HEK293 (cell line): ENCODE measurements at regions of chr1 and their contacts with region 1.

Region 1: DNA sequence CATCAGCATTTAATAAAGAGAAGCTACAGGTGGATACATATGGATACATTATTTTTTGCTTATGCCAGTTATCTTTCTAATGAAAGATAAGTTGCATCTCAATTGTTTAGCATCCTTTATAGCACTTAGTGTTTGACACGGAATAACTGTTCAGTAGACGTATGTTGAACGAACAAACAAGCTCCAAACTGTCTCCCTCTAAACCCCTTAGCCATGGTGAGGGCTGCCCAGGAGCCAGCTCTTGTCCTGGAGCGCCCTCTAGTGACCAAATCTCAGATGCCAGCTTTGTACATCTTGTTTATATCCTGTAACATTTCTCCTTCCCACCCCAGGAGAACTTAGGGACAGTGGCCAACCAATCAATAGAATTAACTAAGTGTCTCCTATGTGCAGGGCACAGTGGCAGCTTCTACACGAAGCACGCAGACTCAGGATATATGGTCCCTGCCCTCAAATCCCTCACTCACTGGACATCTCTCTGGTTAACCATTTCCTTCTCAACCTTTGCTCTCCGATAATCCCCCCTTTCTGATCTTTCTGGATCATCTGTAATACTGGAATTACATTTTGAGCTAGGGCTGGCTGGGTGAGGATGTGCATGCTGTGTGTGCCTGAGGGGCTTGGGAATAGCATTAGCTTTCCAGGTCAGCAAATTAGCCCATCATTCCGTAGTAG is 22.9 kb downstream of the KCNA10 start:
- H3K4me3 ChIP-seq: no peak overlapping the region
- H3K27ac ChIP-seq: no peak overlapping the region
- H3K4me1 ChIP-seq: no peaks in the 10 kb centered on the region
- CTCF ChIP-seq: peak; percentile 87

Region 2: DNA sequence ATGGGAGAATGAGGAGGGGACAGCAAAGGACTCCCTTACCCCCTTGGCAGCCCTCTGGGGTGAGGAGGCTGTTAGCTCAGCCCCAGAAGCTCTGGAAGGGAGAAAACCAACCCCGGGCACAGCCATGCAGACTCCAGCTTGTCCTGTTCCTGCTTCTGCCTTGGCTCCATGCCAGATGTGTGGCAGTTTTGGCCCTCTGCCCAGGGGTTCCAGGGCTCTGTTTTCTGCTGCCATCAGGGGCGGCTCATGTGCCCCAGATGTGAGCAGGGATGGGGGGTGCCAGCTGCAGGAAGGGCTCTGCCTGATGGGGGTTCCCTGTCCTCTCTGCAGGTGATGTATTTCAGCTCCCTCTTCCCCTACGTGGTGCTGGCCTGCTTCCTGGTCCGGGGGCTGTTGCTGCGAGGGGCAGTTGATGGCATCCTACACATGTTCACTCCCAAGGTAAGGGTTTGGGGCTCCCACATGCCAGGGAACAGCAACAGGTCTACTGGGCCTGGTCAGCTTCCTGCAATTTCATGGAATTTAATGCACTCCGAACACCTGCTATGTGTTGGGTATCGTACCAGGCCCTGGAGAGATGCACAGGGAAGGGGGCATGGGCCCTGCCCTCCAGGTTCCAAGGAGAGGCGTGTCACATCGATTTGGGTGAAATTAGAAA is 319.6 kb before region 1 on chr1:
- CTCF ChIA-PET with region 1: interaction called, 10 read pairs
- POLR2A ChIA-PET with region 1: no interaction called
- H3K4me3 ChIP-seq: no peak overlapping the region
- H3K27ac ChIP-seq: no peak overlapping the region
- H3K4me1 ChIP-seq: no peaks in the 10 kb centered on the region; the same call in 1 of the 2 replicates
- CTCF ChIP-seq: no peak

Region 3: GRCh38 chr1:110209715-110210603 is 286.1 kb before region 1 on chr1 and contains the start of gene KCNC4:
- CTCF ChIA-PET with region 1: interaction called, 241 read pairs
- POLR2A ChIA-PET with region 1: interaction called, 6 read pairs
- H3K4me3 ChIP-seq: peak within 1 kb of the TSS; percentile 56
- H3K27ac ChIP-seq: peak within 1 kb of the TSS; percentile 78
- H3K4me1 ChIP-seq: peaks cover 7% of the 10 kb centered on the region
- CTCF ChIP-seq: no peak

Region 4: DNA sequence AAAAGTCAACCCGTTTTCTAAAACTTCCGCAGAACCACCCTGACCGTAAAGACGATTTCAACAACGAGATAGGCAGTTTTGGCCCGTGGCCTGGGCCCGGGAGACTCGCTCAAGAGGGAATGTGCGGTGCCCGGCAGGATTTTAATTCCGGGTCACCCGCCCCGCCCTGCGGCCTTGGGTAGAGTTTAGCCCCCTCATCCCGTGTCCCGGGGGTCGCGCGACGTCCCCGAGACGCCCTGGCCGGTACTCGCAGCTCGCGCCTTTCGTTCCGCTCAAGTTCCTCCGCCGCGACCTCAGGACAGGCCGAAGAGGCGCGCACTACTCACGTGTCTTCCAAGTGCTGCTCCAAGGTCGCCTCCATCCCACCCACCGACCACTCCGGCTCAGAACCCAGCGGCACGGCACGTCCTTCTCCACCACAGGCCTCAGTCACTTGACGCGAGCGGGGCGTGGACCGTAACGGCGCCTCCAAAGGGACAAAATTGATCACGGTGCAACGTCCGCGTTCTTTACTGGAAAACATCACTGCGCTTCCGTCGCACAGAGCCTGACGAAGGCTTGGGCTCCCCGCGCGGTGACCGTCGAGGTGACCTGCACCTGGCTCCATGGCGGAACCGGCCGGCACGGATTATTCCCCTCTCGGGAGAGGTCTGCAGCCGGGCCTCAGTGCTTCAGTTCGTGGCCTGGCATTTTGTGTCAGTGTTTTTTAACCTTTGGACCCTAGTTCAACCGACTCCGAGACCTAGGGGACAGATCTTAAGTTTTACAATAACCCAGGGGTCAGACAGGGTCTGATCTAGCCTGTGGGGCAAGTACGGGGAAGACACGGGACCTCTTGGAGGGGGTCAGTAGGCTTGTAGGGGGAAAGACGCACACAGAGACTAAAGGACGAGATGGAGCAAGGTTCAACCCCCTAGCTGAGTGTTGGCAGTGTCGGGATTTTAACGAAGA is 88.5 kb before region 1 on chr1 and contains the start of gene LAMTOR5:
- CTCF ChIA-PET with region 1: interaction called, 50 read pairs
- POLR2A ChIA-PET with region 1: interaction called, 3 read pairs
- H3K4me3 ChIP-seq: peak within 1 kb of the TSS; percentile 98
- H3K27ac ChIP-seq: peak within 1 kb of the TSS; percentile 68
- H3K4me1 ChIP-seq: no peaks in the 10 kb centered on the region
- CTCF ChIP-seq: peak; percentile 57; the same call in 1 of the 2 replicates

Region 5: GRCh38 chr1:110455151-110455550 is 40.9 kb before region 1 on chr1:
- CTCF ChIA-PET with region 1: interaction called, 215 read pairs
- POLR2A ChIA-PET with region 1: no interaction called
- H3K4me3 ChIP-seq: no peak overlapping the region
- H3K27ac ChIP-seq: no peak overlapping the region
- H3K4me1 ChIP-seq: no peaks in the 10 kb centered on the region
- CTCF ChIP-seq: no peak

Region 6: DNA sequence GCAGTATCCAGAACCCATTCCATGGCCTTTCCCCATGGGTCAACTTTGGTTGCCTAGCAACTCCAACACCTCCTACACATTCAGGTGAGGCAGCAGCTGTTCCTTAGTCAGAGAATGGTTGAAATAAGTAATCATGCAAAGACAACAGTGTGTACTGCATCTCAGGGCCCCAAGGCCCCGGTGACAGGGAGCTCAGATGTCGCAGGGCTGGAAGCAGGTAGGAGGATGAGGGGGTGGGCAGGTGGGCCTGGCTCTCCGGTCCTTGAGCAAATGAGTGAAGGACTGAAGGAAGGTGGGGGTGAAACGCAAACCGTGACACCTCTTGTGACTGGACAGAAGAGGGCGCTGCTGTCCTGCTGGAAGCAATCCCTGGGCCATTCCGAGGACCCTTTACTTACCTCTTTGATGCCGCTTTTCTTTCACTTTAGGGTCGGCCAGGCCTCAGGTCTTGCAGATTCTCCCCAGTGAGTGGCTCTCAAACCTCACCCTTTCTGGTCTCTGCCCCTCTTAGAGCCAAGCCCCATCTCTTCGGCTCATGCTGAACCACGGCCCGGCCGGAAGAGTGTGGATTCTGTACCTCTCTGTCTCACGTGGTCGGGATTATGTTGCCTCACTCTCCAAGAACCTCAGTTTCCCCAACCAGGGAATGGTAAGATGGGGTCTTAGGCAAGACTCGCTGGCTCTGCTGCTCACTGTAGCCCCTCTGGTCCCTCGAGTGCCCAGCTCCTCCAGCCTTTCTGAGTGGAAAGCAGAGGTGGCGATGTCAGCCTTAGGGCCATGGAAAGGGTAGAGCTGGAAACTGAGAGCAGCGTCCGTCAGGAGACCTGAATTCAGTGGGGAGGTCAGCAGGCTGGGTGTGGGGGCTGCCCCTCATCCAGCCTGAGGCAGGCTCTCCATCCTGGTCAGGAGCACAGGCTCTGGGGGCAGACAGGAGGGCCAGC is 28.5 kb after region 1 on chr1:
- CTCF ChIA-PET with region 1: interaction called, 20 read pairs
- POLR2A ChIA-PET with region 1: no interaction called
- H3K4me3 ChIP-seq: no peak overlapping the region
- H3K27ac ChIP-seq: no peak overlapping the region
- H3K4me1 ChIP-seq: no peaks in the 10 kb centered on the region
- CTCF ChIP-seq: peak; percentile 76